ENCODE measurements at regions of chr2 and their contacts with region 1.

Region 1: GRCh38 chr2:109516445-109517117 is 97.2 kb downstream of the SEPTIN10 start:
- DNase-seq: peak; percentile 73
- ATAC-seq: peak; percentile 94
- H3K4me3 ChIP-seq: peak overlapping the region; percentile 40 to 77 (median 45)
- H3K27ac ChIP-seq: peak overlapping the region; percentile 14
- H3K4me1 ChIP-seq: peaks cover 36% of the 10 kb centered on the region
- H3K27me3 ChIP-seq: peaks cover 0 to 17% of the 10 kb centered on the region in 2 experiments; a peak in 2 of 5 replicates
- CTCF ChIP-seq: peak; percentile 100
- EP300 ChIP-seq: 0 out of 4 replicates have a peak, but pooled peaks of 1 of the 2 experiments have one; percentile 20
- POLR2A ChIP-seq: 0 out of 4 replicates have a peak, but pooled peaks of 1 of the 2 experiments have one; percentile 30
- RAD21 ChIP-seq: peak; percentile 98

Region 2: GRCh38 chr2:109356324-109357035 is 160.1 kb before region 1 on chr2:
- CTCF ChIA-PET with region 1: no interaction called
- POLR2A ChIA-PET with region 1: no interaction called
- in situ Hi-C with region 1: no loop called
- intact Hi-C with region 1: no loop called
- DNase-seq: no peak
- ATAC-seq: no peak
- H3K4me3 ChIP-seq: no peak overlapping the region
- H3K27ac ChIP-seq: no peak overlapping the region
- H3K4me1 ChIP-seq: no peaks in the 10 kb centered on the region
- H3K27me3 ChIP-seq: peaks cover 0 to 5% of the 10 kb centered on the region in 2 experiments; a peak in 2 of 5 replicates
- CTCF ChIP-seq: no peak
- EP300 ChIP-seq: no peak
- POLR2A ChIP-seq: no peak
- RAD21 ChIP-seq: no peak

Region 3: GRCh38 chr2:109535217-109535946 is 18.8 kb after region 1 on chr2:
- CTCF ChIA-PET with region 1: no interaction called
- POLR2A ChIA-PET with region 1: no interaction called
- in situ Hi-C with region 1: no loop called
- intact Hi-C with region 1: loop called (anchors 2 kb)
- DNase-seq: peak; percentile 45
- ATAC-seq: peak; percentile 60
- H3K4me3 ChIP-seq: peak overlapping the region in 1 of 3 experiments; percentile 11; a peak in 1 of 6 replicates
- H3K27ac ChIP-seq: no peak overlapping the region
- H3K4me1 ChIP-seq: peaks cover 41% of the 10 kb centered on the region
- H3K27me3 ChIP-seq: peaks cover 7 to 35% of the 10 kb centered on the region in 2 experiments
- CTCF ChIP-seq: no peak
- EP300 ChIP-seq: no peak
- POLR2A ChIP-seq: no peak
- RAD21 ChIP-seq: no peak

Region 4: DNA sequence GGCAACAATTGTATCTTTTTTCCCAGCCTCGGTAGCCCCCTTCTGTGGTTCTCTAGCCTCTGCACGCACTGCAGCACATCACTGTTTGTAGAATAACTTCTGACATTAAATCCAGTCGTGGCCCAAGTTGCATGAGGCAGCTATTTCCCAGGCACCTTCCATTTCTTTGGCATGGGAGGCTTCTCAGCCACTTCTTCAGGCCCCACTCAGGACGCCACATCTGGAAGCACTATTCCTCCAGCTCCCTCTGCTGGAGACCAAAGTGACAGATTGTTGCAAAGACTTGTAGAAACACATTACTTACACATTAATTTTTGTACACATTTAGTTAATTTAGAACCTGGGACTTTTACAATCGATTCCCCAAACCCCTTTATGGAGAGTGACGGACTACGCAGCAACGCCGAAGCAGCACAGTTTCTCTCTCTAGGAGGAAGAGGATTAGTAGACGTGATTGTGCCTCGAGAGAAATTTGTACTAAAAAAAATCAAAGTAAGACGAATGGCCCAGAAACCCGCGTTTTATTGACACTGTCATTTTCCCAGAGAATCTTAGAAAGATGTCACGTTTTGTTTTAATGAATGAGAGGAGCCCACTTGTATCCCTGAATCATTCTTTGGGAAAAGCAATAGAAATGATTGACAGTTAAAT is 219.7 kb after region 1 on chr2:
- CTCF ChIA-PET with region 1: interaction called, 31 read pairs
- POLR2A ChIA-PET with region 1: no interaction called
- in situ Hi-C with region 1: no loop called
- intact Hi-C with region 1: no loop called
- DNase-seq: peak; percentile 69
- ATAC-seq: peak; percentile 90
- H3K4me3 ChIP-seq: no peak overlapping the region; a peak in 1 of 6 replicates
- H3K27ac ChIP-seq: no peak overlapping the region
- H3K4me1 ChIP-seq: peaks cover 11% of the 10 kb centered on the region
- H3K27me3 ChIP-seq: no peaks in the 10 kb centered on the region
- CTCF ChIP-seq: peak; percentile 92
- EP300 ChIP-seq: no peak
- POLR2A ChIP-seq: no peak
- RAD21 ChIP-seq: peak; percentile 76

Region 5: GRCh38 chr2:110149330-110150220 is 633.0 kb after region 1 on chr2:
- CTCF ChIA-PET with region 1: no interaction called
- POLR2A ChIA-PET with region 1: no interaction called
- in situ Hi-C with region 1: no loop called
- intact Hi-C with region 1: loop called (anchors 5 kb)
- DNase-seq: no peak
- ATAC-seq: no peak
- H3K4me3 ChIP-seq: no peak overlapping the region
- H3K27ac ChIP-seq: no peak overlapping the region
- H3K4me1 ChIP-seq: peaks cover 29% of the 10 kb centered on the region
- H3K27me3 ChIP-seq: no peaks in the 10 kb centered on the region; a peak in 1 of 5 replicates
- CTCF ChIP-seq: no peak
- EP300 ChIP-seq: no peak
- POLR2A ChIP-seq: no peak
- RAD21 ChIP-seq: no peak

Measured in HepG2 (cell line).